Activated T-helper 2 cell treated with anti-CD3 and anti-CD28 coated beads, Interferon-gamma antibody, Interleukin-2, Interleukin-4, amounts not matched to agents 10 μg/mL and 5 μg/mL and 100 μg/mL, durations not matched to agents 14 hours and 24 hours and 36 hours (primary cell): ENCODE measurements at regions of chr14 and their contacts with region 1.

Region 1: GRCh38 chr14:61475316-61475715 is 153.9 kb downstream of the PRKCH start:
- DNase-seq: no peak
- H3K4me3 Mint-ChIP-seq: no peak overlapping the region
- H3K27ac Mint-ChIP-seq: peak overlapping the region; percentile 81
- H3K4me1 Mint-ChIP-seq: peaks cover 89% of the 10 kb centered on the region
- H3K27me3 Mint-ChIP-seq: no peaks in the 10 kb centered on the region

Region 2: DNA sequence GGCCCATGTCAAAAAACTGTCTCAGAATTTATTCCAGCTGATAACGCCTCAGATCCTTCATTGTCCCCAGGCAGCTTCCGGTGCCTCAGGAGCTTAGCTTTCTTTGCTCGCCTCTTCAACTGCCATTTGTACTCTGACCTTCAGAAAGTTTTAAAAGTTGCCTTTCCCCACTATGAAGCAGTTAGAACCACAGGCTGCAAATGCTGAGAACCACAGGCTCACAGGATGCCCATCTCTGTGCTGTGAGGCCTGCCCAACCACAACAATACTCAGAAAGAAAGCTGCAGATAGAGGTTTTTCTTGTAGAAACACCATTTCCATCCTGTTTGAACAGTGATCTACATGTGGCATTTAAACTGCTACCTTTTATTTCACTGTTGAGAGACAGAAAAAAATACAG is 22.9 kb before region 1 on chr14:
- intact Hi-C with region 1: loop called (anchors 1 kb)
- DNase-seq: peak; percentile 71
- H3K4me3 Mint-ChIP-seq: peak overlapping the region; percentile 54
- H3K27ac Mint-ChIP-seq: peak overlapping the region; percentile 99
- H3K4me1 Mint-ChIP-seq: peaks cover 88% of the 10 kb centered on the region
- H3K27me3 Mint-ChIP-seq: no peaks in the 10 kb centered on the region

Region 3: DNA sequence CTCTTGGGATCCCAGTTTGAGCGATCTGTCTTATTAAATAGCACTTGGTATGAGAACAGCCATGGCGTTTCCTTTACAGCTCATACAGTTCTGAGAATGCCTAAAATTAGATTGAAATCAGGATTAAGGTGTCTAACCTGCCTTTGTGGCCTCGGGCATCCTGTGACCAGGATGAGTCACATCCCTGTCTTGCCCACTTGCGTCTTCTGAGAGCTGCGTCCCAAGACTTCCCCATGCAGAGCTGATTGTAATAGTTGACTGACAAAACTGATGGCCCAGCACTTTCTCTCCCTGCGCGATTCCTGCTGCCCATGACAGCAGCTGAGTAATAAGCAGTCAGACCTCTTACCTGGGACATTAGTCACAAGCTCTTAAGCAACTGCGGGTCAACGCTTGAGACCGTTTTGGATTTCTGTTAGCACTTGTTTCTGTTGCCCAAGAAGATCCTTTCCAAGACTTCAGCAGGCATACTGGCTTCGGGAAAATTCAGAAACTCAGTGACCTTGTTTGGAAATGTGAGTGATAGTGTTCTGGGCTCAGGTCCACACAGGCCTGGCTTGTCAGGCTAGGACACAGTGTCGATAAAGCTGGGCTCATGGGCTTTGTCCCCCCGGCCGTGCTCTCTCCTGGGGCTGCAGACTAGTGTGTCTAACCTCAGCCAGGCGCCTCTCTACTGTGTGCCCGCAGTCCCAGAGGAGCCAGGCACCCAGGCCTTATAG is 50.1 kb after region 1 on chr14:
- intact Hi-C with region 1: loop called (anchors 1 kb)
- DNase-seq: peak; percentile 60
- H3K4me3 Mint-ChIP-seq: peak overlapping the region; percentile 2
- H3K27ac Mint-ChIP-seq: peak overlapping the region; percentile 74
- H3K4me1 Mint-ChIP-seq: peaks cover 69% of the 10 kb centered on the region
- H3K27me3 Mint-ChIP-seq: no peaks in the 10 kb centered on the region

Region 4: DNA sequence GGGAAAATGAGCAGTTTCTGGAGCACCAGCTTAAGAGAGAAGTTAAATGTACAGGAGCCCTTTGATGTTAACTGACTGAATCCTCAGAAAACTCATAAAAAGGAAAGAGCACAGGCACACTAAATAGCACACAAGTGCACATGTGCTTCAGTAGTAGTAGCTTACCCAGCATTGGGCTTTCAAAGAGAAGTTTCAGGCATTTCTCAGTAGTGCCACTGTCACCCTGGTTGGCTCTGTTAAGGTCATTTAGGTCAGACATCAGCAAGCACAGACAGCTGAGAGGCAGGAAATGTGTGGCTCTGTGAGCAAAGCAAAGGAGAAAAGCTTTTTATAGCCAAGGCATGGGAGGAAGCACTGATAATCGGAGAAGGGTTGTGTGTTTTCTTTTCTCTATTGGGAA is 123.7 kb after region 1 on chr14:
- intact Hi-C with region 1: loop called (anchors 1 kb)
- DNase-seq: no peak
- H3K4me3 Mint-ChIP-seq: no peak overlapping the region
- H3K27ac Mint-ChIP-seq: peak overlapping the region; percentile 25
- H3K4me1 Mint-ChIP-seq: peaks cover 41% of the 10 kb centered on the region
- H3K27me3 Mint-ChIP-seq: peaks cover 6% of the 10 kb centered on the region

Region 5: DNA sequence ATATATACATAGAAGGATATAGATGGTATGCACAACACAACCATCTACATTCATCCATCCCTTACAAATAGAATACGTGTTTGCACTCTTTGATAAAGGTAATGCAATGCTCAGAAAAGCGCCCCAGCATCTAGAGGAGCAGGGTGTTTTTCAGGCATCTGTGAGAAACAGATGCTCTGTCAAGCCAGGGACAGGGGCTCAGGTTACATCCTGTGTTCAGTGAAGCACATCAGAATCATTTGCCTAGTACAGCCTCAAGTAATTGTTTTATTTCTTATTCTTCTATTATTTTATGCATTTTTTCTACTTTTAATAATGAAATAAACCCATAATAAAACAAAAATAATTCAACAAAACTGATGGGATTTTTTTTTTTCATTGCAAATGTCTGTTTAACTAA is 169.5 kb after region 1 on chr14:
- intact Hi-C with region 1: no loop called
- DNase-seq: no peak
- H3K4me3 Mint-ChIP-seq: no peak overlapping the region
- H3K27ac Mint-ChIP-seq: no peak overlapping the region
- H3K4me1 Mint-ChIP-seq: peaks cover 31% of the 10 kb centered on the region
- H3K27me3 Mint-ChIP-seq: no peaks in the 10 kb centered on the region

Region 6: GRCh38 chr14:61694830-61695694 is 219.7 kb after region 1 on chr14 and contains the start of gene HIF1A:
- intact Hi-C with region 1: loop called (anchors 1 kb)
- DNase-seq: peak; percentile 96
- H3K4me3 Mint-ChIP-seq: peak within 1 kb of the TSS; percentile 89
- H3K27ac Mint-ChIP-seq: peak within 1 kb of the TSS; percentile 95
- H3K4me1 Mint-ChIP-seq: peaks cover 50% of the 10 kb centered on the region
- H3K27me3 Mint-ChIP-seq: no peaks in the 10 kb centered on the region
- total RNA-seq, gene HIF1A: 131 and 138 TPM in 2 replicates

Region 7: DNA sequence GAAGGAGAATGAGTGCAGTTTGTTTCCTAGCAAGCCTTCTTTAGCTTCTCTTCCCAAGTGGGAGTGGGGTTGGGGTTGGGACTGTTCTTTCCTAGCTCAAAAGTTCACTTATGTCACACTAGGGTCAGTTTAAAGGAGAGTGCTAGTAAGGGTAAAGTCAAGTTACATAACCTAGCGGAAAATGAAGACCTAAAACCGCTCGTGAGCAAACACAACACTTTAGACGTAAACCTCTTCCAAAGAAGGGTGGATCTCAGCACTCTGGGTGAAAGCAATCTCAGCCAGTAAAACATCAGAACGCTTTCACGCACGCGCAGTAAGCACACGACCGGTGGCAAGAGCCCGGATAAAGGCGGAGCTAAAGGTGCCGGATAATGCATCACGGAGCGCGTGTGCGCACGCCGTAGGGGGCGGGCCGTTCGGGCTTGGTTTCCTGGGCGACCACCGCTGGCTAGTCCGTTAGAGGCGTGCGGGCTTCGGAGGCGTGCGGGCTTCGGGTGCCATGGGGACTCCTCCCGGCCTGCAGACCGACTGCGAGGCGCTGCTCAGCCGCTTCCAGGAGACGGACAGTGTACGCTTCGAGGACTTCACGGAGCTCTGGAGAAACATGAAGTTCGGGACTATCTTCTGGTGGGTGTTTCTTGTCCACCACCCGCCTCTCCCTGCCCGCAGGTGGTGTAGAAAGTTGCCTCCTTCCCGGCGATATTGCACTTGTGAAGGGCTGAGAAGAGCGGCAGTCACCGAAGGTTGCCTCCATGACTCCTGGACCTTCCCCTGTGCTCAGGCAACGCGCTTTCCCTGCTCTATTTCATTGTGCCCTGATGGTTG is 286.9 kb after region 1 on chr14 and contains the start of gene SNAPC1:
- intact Hi-C with region 1: loop called (anchors 2 kb)
- DNase-seq: peak; percentile 98
- H3K4me3 Mint-ChIP-seq: peak within 1 kb of the TSS; percentile 94
- H3K27ac Mint-ChIP-seq: peak within 1 kb of the TSS; percentile 93
- H3K4me1 Mint-ChIP-seq: peaks cover 36% of the 10 kb centered on the region
- H3K27me3 Mint-ChIP-seq: peaks cover 3% of the 10 kb centered on the region
- total RNA-seq, gene SNAPC1: 10.2 and 10.5 TPM in 2 replicates